ENCODE measurements at regions of chr14 and their contacts with region 1.

Region 1: DNA sequence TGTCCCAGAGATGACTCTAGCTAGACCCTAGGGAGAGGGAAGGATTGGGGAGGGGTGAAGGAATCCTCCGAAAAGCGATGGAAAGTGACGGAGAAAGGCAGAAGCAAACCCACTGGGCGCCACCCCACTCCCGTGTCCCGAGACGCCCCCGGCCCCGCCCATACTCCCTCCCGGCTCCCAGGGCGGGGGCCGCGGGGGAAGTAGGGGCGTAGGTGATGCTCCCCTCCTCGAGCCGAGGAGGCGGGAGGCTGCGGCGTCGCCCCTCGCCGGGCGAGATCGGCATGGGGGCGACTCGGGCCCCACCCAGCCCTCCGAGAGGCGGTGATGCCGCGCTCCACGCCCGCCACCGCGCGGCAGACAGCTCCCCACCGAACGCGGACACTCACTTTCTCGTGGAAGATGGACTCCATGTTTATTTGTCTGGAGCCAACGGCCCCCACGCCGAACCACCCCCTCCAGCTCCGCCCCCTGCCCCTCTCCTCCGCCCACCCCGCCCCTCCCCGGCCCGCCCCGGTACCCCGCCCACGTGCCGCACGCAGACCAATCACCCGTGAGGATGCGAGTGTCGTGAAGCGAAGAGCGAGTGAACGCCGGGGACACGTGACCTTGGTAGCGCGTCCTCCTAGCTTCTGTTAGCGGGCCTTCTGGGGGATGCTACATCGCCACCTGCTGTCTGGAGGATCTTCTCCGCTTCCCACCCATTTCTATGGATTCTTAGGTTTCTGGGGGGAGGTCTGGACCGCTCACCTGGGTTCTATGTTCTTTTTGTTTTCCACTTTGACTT is at the start of gene ATXN3:
- DNase-seq: peak; percentile 80
- H3K4me3 ChIP-seq: peak within 1 kb of the TSS; percentile 80
- H3K27me3 ChIP-seq: no peaks in the 10 kb centered on the region
- CTCF ChIP-seq: peak; percentile 90
- polyA plus RNA-seq, gene ATXN3: 8.6 and 22.9 TPM in 2 replicates

Region 2: DNA sequence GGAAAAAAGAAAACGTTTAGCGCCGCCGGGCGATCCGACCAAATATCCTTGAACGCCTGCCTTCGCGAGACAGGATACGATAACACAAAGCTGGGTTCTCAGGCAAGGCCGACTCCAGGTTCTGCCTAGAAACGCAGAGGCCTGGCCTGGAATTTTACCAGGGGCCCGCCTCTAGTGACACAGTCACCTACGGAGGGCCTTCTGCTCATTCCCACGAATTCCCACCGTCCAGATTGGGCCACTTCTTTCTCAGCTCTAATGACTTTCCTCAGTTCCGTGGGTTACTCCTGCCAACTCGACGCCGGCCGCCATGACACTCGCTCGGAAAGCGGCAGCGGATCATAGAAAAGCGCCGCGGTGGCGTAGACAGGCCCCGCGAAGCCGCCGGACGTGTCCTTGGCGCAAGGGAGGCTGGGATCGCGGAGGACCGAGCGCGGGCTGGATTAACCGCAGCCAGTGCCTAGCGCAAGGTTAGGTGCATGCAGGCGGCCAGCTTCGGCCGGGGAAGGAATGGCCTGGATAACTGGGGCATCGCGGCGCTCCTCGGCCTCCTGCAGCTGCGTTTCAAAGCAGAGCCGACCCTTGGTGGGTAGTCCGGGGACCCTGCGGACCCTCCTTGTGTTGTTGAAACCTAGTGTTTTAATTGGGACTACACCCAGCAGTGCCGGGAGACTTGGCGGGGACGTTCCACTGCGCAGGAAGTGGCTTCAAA is 66.5 kb before region 1 on chr14 and contains the start of gene TRIP11:
- CTCF ChIA-PET with region 1: interaction called, 6 read pairs
- POLR2A ChIA-PET with region 1: interaction called, 13 read pairs
- DNase-seq: peak; percentile 58
- H3K4me3 ChIP-seq: peak within 1 kb of the TSS; percentile 75
- H3K27me3 ChIP-seq: no peaks in the 10 kb centered on the region
- CTCF ChIP-seq: no peak
- polyA plus RNA-seq, gene TRIP11: 14.7 and 20.2 TPM in 2 replicates

Region 3: GRCh38 chr14:92121670-92122350 is 15.5 kb after region 1 on chr14 and contains the starts of genes CPSF2 and NDUFB1:
- CTCF ChIA-PET with region 1: interaction called, 76 read pairs
- POLR2A ChIA-PET with region 1: interaction called, 3 read pairs
- DNase-seq: no peak
- H3K4me3 ChIP-seq: peak within 1 kb of the TSS; percentile 82
- H3K27me3 ChIP-seq: no peaks in the 10 kb centered on the region
- CTCF ChIP-seq: no peak
- polyA plus RNA-seq, gene CPSF2: 14.2 and 35.7 TPM in 2 replicates
- polyA plus RNA-seq, gene NDUFB1: 163 and 327 TPM in 2 replicates

Region 4: DNA sequence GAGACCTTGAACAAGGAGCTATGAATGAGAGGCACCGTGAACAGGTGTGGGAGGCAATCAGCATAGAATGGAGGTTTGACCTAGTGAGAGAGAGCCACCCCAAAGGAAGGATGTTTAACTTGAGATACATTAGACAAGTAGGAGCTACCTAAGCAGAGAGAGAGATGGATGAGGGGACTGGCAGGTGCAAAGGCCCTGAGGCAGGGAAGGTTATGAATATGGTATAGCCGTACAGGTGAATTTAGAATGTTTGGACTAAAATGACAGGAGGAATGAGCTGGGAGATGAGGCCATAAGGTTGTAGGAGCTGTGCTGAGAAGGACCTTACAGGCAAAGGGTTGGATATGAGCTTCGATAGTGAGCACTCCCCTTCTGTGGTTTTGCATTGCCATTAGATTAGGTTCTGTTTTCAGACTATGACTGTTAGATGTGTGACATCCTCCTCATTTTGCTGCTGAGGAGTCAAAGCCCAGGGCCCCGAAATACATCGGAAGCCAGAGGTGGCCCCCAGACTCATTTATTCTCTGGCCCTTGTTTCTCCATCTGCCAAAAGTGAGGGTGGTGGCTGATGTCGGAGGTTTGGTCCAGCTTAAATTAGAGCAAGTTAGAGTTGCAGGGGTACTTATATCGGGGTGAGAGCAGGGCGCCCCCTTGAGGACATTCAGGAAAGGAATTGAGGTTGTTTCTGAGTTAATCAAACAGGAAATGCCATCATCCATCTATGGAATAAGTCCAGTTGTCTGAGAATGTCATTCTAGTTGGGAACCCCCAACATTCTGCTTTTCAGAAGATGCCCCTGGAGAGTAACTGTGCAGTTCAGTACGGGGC is 246.0 kb after region 1 on chr14:
- CTCF ChIA-PET with region 1: no interaction called
- POLR2A ChIA-PET with region 1: no interaction called
- DNase-seq: no peak
- H3K4me3 ChIP-seq: no peak overlapping the region
- H3K27me3 ChIP-seq: no peaks in the 10 kb centered on the region; the same call in 1 of the 2 replicates
- CTCF ChIP-seq: peak; percentile 28; the same call in 1 of the 2 replicates

Measured in BJ (cell line).